ENCODE measurements at regions of chr1 and their contacts with region 1.

Region 1: DNA sequence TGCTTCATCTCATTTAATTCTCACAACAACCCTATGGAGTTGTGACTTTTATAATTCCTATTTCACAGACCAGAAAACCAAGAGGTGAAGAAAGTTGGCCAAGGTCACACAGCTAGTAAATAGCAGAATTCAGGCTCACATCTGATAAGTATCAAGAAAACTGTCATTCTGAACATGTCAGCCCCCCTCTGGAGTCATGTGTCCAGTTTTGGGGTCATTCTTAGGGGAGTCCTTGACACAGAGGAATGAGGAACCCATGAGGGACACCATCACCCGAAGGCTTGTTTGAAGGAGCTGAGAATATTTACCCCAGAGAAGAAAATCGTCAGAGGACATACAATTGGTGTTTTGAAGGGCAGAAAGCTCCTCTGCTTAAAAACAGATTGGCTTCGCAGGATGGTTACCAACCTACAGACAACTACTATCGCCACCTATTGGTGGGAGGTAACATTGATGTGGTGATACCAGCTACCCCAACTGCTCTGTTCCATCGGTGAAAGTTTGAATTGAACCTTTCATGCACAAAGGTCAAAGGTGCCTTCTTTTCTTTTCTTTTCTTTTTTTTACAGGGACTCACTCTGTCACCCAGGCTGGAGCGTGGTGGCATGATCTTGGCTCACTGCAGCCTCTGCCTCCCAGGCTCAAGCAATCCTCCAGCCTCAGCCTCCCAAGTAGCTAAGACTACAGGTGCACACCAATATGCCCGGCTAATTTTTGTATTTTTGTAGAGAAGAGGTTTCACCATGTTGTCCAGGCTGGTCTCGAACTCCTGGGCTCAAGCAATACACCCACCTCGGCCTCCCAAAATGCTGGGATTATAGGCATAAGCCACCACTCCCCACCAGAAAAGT is 31.3 kb downstream of the NCMAP start:
- DNase-seq: peak; percentile 68 to 78 (median 72)
- ATAC-seq: peak; percentile 88
- H3K4me3 ChIP-seq: no peak overlapping the region
- H3K27ac ChIP-seq: no peak overlapping the region
- H3K4me1 ChIP-seq: peaks cover 14 to 16% of the 10 kb centered on the region in 2 experiments; a peak in 4 of 5 replicates
- H3K27me3 ChIP-seq: peaks cover 32 to 60% of the 10 kb centered on the region in 2 experiments; a peak in 4 of 5 replicates
- CTCF ChIP-seq: peak; percentile 71 to 84 (median 76)
- EP300 ChIP-seq: no peak
- POLR2A ChIP-seq: no peak
- RAD21 ChIP-seq: peak; percentile 16 to 62; a peak in 2 of 4 replicates

Region 2: DNA sequence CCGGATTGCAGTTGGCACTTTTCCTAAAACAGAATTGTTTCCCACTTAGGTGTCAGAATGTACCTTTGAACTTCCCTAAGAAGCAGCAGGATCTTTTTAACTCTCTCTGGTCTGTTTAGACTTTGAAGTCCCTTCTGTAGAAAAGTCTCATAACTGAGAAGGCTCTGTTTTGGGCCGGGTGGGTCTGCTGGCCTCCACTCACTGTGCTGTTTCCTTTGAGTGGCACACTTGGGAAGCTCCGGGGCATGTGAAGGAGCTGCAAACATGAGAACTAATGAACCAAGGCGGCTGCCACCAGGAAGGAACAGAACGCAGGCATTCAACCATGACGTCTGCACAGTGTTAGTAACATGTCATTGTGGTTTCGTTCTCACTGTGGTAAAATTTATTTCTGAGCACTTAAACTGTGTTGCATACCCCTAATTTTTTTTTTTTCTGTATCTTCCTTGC is 50.8 kb before region 1 on chr1:
- CTCF ChIA-PET with region 1: no interaction called
- POLR2A ChIA-PET with region 1: interaction called, 3 read pairs
- in situ Hi-C with region 1: no loop called
- intact Hi-C with region 1: loop called (anchors 5 kb)
- DNase-seq: no peak
- ATAC-seq: peak; percentile 42
- H3K4me3 ChIP-seq: no peak overlapping the region
- H3K27ac ChIP-seq: no peak overlapping the region
- H3K4me1 ChIP-seq: peaks cover 5 to 15% of the 10 kb centered on the region in 2 experiments; a peak in 4 of 5 replicates
- H3K27me3 ChIP-seq: peaks cover 5 to 12% of the 10 kb centered on the region in 2 experiments; a peak in 4 of 5 replicates
- CTCF ChIP-seq: no peak
- EP300 ChIP-seq: no peak
- POLR2A ChIP-seq: no peak
- RAD21 ChIP-seq: no peak

Measured in K562 (cell line).